ENCODE measurements at regions of chr19 and their contacts with region 1.

Region 1: GRCh38 chr19:4139614-4140236 is 13.7 kb upstream of the CREB3L3 start:
- DNase-seq: peak; percentile 48
- ATAC-seq: peak; percentile 98
- H3K4me3 ChIP-seq: no peak overlapping the region
- H3K27ac ChIP-seq: no peak overlapping the region
- H3K4me1 ChIP-seq: peaks cover 4% of the 10 kb centered on the region; the same call in 1 of the 2 replicates
- H3K27me3 ChIP-seq: no peaks in the 10 kb centered on the region
- CTCF ChIP-seq: peak; percentile 85 to 97 (median 95)
- EP300 ChIP-seq: no peak
- POLR2A ChIP-seq: no peak
- RAD21 ChIP-seq: peak; percentile 61

Region 2: GRCh38 chr19:4108767-4109625 is 30.7 kb before region 1 on chr19:
- CTCF ChIA-PET with region 1: interaction called, 15 read pairs
- POLR2A ChIA-PET with region 1: interaction called, 3 read pairs
- RAD21 ChIA-PET with region 1: interaction called, 15 read pairs
- SMC1A ChIA-PET with region 1: interaction called, 8 read pairs
- in situ Hi-C with region 1: no loop called
- intact Hi-C with region 1: no loop called
- DNase-seq: peak; percentile 79
- ATAC-seq: peak; percentile 94
- H3K4me3 ChIP-seq: 0 out of 2 replicates have a peak overlapping the region, but pooled peaks have one; percentile 26
- H3K27ac ChIP-seq: peak overlapping the region; percentile 95
- H3K4me1 ChIP-seq: peaks cover 32% of the 10 kb centered on the region
- H3K27me3 ChIP-seq: no peaks in the 10 kb centered on the region
- CTCF ChIP-seq: no peak
- EP300 ChIP-seq: peak; percentile 63 to 65; a peak in 2 of 4 replicates
- POLR2A ChIP-seq: peak; percentile 73; the same call in 1 of the 2 replicates
- RAD21 ChIP-seq: peak; percentile 8; the same call in 1 of the 2 replicates

Region 3: DNA sequence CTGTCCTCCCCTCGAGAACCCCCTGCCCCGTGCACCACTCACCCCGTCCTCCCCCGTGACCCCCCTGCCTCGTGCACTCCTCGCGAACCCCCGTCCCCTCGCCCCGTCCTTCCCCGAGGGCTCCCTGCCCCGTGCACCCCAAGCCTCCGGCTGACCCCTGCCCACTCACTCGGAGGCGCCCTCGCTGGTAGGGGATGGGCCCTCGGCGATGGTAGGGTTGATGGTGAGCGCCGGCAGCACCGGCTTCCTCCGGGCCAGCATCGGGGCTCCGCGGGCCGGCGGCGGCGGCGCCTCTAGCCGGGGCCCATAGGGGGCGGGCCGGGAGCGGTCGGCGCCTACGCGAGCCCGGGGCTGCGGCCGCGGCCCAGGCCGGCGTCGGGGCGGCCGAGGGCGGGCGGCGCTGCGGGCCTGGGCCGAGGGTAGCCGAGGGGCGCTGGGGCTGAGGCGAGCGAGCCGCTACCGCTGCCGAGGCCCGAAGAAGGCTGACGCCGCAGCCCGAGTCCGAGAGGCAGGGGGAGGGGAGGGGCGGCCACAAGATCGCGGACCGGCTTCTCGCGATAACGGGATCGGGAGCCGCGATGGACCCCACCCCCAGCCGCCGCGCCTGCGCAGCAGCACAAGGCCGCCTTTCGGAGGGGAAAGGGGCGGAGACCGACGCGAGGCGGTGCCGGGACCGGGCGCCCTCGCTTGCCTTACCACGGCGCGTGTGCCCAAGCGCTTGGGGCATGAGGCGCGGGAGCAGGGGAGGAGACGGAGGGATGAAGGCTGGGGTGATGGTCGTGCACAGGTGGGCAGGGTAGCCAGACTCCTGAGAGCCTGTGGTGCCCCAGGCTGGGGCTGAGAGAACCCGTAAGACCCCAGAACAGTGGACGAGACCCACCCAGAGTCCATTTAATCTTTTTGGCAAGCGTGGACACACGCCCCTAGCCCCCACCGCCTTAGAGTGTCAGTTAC is 15.8 kb before region 1 on chr19 and contains the start of gene MAP2K2:
- CTCF ChIA-PET with region 1: interaction called, 28 read pairs
- POLR2A ChIA-PET with region 1: interaction called, 3 read pairs
- RAD21 ChIA-PET with region 1: interaction called, 3 read pairs
- SMC1A ChIA-PET with region 1: no interaction called
- in situ Hi-C with region 1: no loop called
- intact Hi-C with region 1: no loop called
- DNase-seq: peak; percentile 60
- ATAC-seq: peak; percentile 97
- H3K4me3 ChIP-seq: peak within 1 kb of the TSS; percentile 99
- H3K27ac ChIP-seq: peak within 1 kb of the TSS; percentile 78
- H3K4me1 ChIP-seq: no peaks in the 10 kb centered on the region; the same call in 1 of the 2 replicates
- H3K27me3 ChIP-seq: no peaks in the 10 kb centered on the region
- CTCF ChIP-seq: no peak
- EP300 ChIP-seq: no peak
- POLR2A ChIP-seq: peak; percentile 87
- RAD21 ChIP-seq: no peak
- polyA plus RNA-seq, gene MAP2K2: 1.00 to 6.8 TPM

Region 4: DNA sequence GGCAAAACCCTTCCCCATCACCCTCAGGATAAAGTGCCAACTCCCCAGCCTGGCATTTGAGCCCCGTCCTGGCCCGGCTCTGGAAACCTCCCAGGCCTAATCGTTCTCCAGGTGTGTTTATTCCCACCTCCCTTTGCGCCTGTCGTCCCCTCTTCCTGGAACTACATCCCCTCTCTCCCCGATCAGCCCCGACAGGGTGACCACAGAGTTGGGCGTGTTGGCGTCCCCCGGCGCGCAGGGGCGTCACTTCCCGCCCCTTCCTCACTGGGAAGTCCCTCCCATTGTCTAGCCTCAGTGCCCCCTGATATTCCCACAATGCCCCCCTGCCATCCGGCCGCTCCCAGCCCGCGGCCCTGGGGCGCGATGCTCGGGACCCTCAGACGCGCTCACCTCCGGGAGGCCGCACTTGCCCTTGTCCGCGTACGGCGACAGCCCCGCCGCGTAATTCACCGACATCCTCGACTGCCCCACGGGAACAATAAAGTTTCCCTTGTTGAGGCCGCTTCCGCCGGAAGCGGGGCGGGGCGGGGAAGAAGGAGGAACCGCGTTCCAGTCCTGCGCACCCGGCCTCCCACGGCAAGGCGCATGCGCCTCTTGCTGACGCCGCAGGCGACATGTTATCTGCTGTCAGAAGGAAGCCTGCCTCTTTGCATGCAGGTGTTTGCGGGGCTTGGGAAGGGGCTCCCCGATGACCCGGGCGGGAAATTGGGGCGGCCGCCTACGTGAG is 42.5 kb after region 1 on chr19 and contains the starts of genes ANKRD24 and SIRT6:
- CTCF ChIA-PET with region 1: interaction called, 32 read pairs
- POLR2A ChIA-PET with region 1: interaction called, 7 read pairs
- RAD21 ChIA-PET with region 1: interaction called, 4 read pairs
- SMC1A ChIA-PET with region 1: no interaction called
- in situ Hi-C with region 1: no loop called
- intact Hi-C with region 1: no loop called
- DNase-seq: peak; percentile 81
- ATAC-seq: peak; percentile 87
- H3K4me3 ChIP-seq: peak within 1 kb of the TSS; percentile 83
- H3K27ac ChIP-seq: peak within 1 kb of the TSS; percentile 94
- H3K4me1 ChIP-seq: peaks cover 15% of the 10 kb centered on the region
- H3K27me3 ChIP-seq: no peaks in the 10 kb centered on the region
- CTCF ChIP-seq: no peak
- EP300 ChIP-seq: peak; percentile 26 to 34; a peak in 1 of 4 replicates
- POLR2A ChIP-seq: peak; percentile 88
- RAD21 ChIP-seq: no peak
- polyA plus RNA-seq, gene ANKRD24: 0.02 TPM in 1 of 2 experiments, not detected in the other
- polyA plus RNA-seq, gene SIRT6: 1.3 to 1.5 TPM

Region 5: DNA sequence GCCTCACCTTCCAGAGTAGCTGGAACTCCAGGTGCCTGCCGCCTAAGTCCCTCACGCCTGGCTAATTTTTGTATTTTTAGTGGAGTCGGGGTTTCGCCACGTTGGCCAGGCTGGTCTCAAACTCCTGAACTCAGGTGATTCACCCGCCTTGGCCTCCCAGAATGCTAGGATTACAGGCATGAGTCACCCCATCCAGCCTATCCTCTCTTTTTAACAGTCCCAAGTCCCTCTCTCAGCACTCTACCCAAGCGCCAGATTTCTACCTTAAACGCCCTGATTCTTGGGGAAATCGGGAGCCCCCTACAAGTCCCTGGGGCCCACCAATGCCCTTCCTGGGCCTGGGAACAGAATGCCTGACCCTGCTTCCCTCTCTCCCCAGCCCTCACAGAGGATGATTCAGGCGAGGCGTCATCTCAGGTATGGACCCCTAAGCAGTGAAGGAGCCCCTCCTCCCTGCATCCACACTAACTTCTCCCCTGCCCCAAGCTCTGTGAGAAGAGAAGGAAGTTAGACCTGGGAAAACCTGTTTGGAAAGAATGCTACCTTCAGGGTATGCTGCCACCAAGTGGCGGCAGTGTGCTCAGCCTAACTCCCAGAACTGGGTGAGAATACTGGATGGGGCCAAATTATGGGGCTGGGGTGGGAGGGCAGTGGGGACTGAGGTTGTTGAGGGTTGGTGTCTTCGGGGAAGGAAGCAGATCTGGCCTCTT is 68.8 kb after region 1 on chr19:
- CTCF ChIA-PET with region 1: interaction called, 63 read pairs
- POLR2A ChIA-PET with region 1: interaction called, 3 read pairs
- RAD21 ChIA-PET with region 1: no interaction called
- SMC1A ChIA-PET with region 1: interaction called, 5 read pairs
- in situ Hi-C with region 1: no loop called
- intact Hi-C with region 1: loop called (anchors 1 kb)
- DNase-seq: no peak
- ATAC-seq: peak; percentile 68
- H3K4me3 ChIP-seq: no peak overlapping the region
- H3K27ac ChIP-seq: no peak overlapping the region
- H3K4me1 ChIP-seq: no peaks in the 10 kb centered on the region
- H3K27me3 ChIP-seq: no peaks in the 10 kb centered on the region
- CTCF ChIP-seq: peak; percentile 61 to 78 (median 62)
- EP300 ChIP-seq: no peak
- POLR2A ChIP-seq: no peak
- RAD21 ChIP-seq: peak; percentile 14; the same call in 1 of the 2 replicates